ENCODE measurements at regions of chr20 and their contacts with region 1.

Region 1: DNA sequence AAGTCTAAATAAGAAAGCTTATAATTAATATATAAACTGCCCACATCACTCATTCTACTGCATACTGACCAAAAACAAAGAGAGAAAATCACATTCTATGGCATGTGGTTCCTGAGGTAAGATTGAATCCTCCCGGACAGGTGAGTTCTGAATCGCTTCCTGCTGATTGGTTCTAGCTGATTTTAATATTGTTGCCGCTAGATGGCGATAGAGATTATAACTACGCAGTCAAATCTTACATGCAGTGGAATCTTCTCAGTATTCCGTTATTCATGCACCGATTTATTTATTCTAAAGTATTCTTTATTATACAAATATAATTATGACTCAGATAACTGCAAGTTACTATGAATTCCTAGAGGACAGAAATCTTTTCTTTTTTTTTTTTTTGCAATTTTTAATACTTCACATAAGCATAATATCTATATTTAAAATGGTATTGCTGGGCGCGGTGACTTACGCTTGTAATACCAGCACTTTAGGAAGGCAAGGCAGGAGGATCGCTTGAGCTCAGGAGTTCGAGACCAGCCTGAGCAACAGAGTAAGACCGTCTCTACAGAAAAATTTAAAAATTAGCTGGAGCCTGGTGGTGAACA is 24.2 kb upstream of the TMX4 start:
- DNase-seq: peak; percentile 34
- H3K4me3 Mint-ChIP-seq: no peak overlapping the region
- H3K27ac Mint-ChIP-seq: no peak overlapping the region
- H3K4me1 Mint-ChIP-seq: peaks cover 7% of the 10 kb centered on the region
- H3K27me3 Mint-ChIP-seq: peaks cover 11% of the 10 kb centered on the region
- CTCF ChIP-seq: peak; percentile 50

Region 2: DNA sequence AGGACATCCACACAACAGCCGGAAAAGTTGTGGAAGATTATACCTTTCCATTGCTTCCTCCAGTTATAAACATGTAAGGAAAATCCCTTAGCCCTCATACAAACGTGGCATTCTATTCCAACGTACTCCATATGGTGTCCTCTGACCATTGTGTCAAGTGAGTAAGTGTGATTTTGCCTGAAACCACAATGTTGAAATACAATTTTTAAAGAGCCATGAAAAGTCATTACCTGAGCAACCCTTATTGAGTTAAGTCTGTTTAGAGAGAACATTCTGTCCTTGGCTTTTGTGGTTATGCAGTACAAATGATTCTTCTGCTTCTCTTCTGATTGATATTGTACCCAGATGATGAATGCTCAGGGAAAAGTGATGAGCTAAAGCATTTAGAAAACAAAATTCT is 633.6 kb before region 1 on chr20:
- CTCF ChIA-PET with region 1: no interaction called
- intact Hi-C with region 1: no loop called
- DNase-seq: no peak
- H3K4me3 Mint-ChIP-seq: no peak overlapping the region
- H3K27ac Mint-ChIP-seq: no peak overlapping the region
- H3K4me1 Mint-ChIP-seq: no peaks in the 10 kb centered on the region
- H3K27me3 Mint-ChIP-seq: no peaks in the 10 kb centered on the region
- CTCF ChIP-seq: no peak

Region 3: GRCh38 chr20:8007490-8007889 is 36.3 kb before region 1 on chr20:
- CTCF ChIA-PET with region 1: no interaction called
- intact Hi-C with region 1: no loop called
- DNase-seq: no peak
- H3K4me3 Mint-ChIP-seq: no peak overlapping the region
- H3K27ac Mint-ChIP-seq: no peak overlapping the region
- H3K4me1 Mint-ChIP-seq: no peaks in the 10 kb centered on the region
- H3K27me3 Mint-ChIP-seq: no peaks in the 10 kb centered on the region
- CTCF ChIP-seq: no peak

Region 4: DNA sequence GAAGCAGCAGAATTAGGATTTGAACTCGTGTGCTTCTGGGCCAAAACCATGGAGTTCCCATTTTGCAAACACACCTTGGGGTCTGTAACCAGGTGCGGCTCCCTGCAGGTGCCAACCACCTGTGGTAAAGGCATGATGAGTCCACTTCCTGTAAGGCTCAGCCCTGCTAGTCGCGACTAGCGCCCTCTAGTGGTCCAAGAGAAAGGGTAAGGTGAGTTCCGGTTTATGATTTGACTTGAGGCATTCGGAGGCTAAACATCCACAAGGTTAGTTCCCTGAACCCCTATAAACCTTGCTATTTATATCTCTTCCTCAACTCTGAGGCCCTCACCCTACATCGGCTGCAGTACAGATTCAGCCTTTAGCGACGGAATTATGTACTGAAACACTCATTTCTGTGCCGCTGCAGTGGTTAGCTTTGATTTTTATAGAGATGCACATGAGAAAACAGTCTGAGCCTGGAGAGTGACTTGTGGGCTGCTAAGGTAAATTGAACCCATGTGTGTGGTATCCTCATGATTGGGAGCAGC is 261.7 kb after region 1 on chr20:
- CTCF ChIA-PET with region 1: no interaction called
- intact Hi-C with region 1: loop called (anchors 5 kb)
- DNase-seq: peak; percentile 47
- H3K4me3 Mint-ChIP-seq: no peak overlapping the region
- H3K27ac Mint-ChIP-seq: no peak overlapping the region
- H3K4me1 Mint-ChIP-seq: no peaks in the 10 kb centered on the region
- H3K27me3 Mint-ChIP-seq: no peaks in the 10 kb centered on the region
- CTCF ChIP-seq: peak; percentile 53

Region 5: DNA sequence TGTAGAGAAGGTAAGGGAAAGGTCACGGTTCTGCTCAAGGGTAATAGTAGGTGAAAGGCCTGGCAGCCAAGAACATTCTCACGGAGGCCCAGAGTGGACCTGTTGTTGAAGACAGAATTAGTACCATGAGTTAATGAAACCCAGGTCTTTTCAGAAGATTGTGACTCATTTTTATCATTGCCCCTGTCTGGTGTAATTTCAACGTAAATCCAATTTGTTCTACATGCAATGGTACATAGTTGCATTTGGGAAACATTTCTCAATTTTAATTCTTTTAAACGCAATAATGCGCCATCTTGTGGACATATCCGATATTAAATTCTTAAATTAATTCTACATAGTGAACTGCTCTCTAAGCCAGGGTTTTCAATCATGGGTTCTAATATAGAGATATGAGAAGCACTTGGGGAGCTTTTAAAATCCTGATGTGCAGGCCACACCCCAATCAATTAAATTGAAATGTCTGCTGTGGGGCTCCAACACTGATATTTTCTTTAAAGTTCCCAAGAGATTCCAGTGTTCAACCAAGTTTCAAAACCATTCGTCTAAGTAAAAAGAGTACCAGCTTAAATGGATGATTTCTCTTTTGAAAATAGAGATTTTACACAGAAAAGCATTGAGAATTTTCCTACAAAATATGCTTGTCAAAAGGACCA is 345.7 kb after region 1 on chr20:
- CTCF ChIA-PET with region 1: interaction called, 3 read pairs
- intact Hi-C with region 1: loop called (anchors 2 kb)
- DNase-seq: no peak
- H3K4me3 Mint-ChIP-seq: no peak overlapping the region
- H3K27ac Mint-ChIP-seq: no peak overlapping the region
- H3K4me1 Mint-ChIP-seq: no peaks in the 10 kb centered on the region
- H3K27me3 Mint-ChIP-seq: no peaks in the 10 kb centered on the region
- CTCF ChIP-seq: no peak

Region 6: DNA sequence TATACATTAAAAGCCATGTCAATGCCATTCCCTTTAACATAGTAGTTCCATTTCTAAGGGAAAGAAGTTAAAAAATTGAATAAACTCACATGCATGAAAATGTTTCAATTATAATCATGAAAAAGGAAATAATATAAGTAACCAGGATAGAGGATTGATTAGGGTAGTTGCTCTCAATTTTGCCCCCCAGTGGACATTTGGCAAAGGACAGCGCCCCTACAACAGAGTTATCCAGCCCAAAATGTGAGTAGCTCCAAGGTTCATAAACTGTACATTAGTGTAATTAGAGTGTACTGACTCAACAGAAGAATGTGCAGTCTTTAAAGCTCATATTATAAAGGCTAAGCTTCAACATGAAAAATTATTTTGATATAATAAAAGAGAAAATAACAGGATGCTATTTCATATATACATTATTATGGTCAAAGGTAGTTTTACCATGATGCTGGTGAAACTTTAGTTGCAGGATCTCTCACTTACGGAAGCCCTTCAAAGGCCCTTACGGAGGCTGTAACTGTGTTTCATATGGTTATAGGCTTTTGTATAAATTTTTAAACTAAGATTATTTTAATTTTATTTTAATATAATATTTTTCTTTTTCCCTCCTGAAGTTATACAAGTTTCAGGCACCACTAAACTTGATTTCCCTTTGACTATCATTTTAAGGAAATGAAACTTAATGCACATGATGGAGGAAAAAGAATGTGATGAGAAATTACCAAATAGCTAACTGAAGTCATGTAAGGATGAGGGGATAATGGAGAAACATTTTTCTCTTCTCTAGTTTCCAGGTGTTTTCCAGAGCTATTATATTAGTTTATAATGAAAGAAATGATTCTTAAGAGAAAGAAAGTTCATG is 491.8 kb after region 1 on chr20:
- CTCF ChIA-PET with region 1: no interaction called
- intact Hi-C with region 1: loop called (anchors 10 kb)
- DNase-seq: peak; percentile 26
- H3K4me3 Mint-ChIP-seq: no peak overlapping the region
- H3K27ac Mint-ChIP-seq: no peak overlapping the region
- H3K4me1 Mint-ChIP-seq: no peaks in the 10 kb centered on the region
- H3K27me3 Mint-ChIP-seq: peaks cover 18% of the 10 kb centered on the region
- CTCF ChIP-seq: peak; percentile 51